K562 (cell line): ENCODE measurements at regions of chr22 and their contacts with region 1.

Region 1: GRCh38 chr22:40898850-40899357 is 37.0 kb upstream of the DNAJB7 start:
- DNase-seq: peak; percentile 23 to 66 (median 34)
- ATAC-seq: peak; percentile 74
- H3K4me3 ChIP-seq: no peak overlapping the region
- H3K27ac ChIP-seq: 0 out of 3 replicates have a peak overlapping the region, but pooled peaks have one; percentile 38
- H3K4me1 ChIP-seq: peaks cover 0 to 4% of the 10 kb centered on the region in 2 experiments; a peak in 2 of 5 replicates
- H3K27me3 ChIP-seq: no peaks in the 10 kb centered on the region
- CTCF ChIP-seq: peak; percentile 37 to 71 (median 58); a peak in 5 of 6 replicates
- EP300 ChIP-seq: no peak
- POLR2A ChIP-seq: no peak
- RAD21 ChIP-seq: peak; percentile 65 to 75

Region 2: GRCh38 chr22:40651563-40652501 is 247.1 kb before region 1 on chr22:
- CTCF ChIA-PET with region 1: no interaction called
- POLR2A ChIA-PET with region 1: no interaction called
- in situ Hi-C with region 1: loop called (anchors 10 kb)
- intact Hi-C with region 1: loop called (anchors 10 kb)
- DNase-seq: peak; percentile 87 to 95 (median 89)
- ATAC-seq: peak; percentile 97
- H3K4me3 ChIP-seq: peak overlapping the region; percentile 81
- H3K27ac ChIP-seq: peak overlapping the region; percentile 100
- H3K4me1 ChIP-seq: peaks cover 18 to 36% of the 10 kb centered on the region in 2 experiments
- H3K27me3 ChIP-seq: no peaks in the 10 kb centered on the region
- CTCF ChIP-seq: no peak
- EP300 ChIP-seq: peak; percentile 19; the same call in 1 of the 2 replicates
- POLR2A ChIP-seq: peak; percentile 99
- RAD21 ChIP-seq: no peak